Calu3 (cell line): ENCODE measurements at regions of chr7 and their contacts with region 1.

Region 1: GRCh38 chr7:3164380-3164792 is 120.7 kb upstream of the CARD11 start:
- DNase-seq: peak; percentile 42
- H3K4me3 Mint-ChIP-seq: no peak overlapping the region
- H3K27ac Mint-ChIP-seq: peak overlapping the region; percentile 15
- H3K4me1 Mint-ChIP-seq: peaks cover 32% of the 10 kb centered on the region
- H3K27me3 Mint-ChIP-seq: no peaks in the 10 kb centered on the region
- CTCF ChIP-seq: no peak

Region 2: DNA sequence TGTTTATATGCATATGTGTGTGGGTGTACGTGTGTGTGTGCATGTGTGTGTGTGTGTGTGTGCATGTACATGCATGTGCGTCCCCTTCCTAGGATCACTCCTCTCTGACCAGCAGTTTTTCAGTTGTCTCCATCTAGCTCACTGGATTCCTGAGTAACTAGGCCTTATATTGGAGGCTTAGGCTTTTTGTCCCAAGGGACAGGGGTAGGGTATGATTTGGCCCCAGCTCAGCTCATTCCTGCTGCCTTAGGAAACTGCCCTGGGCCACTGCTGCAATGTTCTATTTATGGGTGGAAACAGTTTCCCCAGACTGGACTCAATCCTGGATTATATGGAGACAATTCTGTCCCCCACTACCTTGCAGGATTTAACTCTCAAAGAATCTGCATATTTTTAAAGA is 67.8 kb after region 1 on chr7:
- CTCF ChIA-PET with region 1: interaction called, 11 read pairs
- intact Hi-C with region 1: no loop called
- DNase-seq: no peak
- H3K4me3 Mint-ChIP-seq: no peak overlapping the region
- H3K27ac Mint-ChIP-seq: no peak overlapping the region
- H3K4me1 Mint-ChIP-seq: no peaks in the 10 kb centered on the region
- H3K27me3 Mint-ChIP-seq: no peaks in the 10 kb centered on the region
- CTCF ChIP-seq: no peak